ENCODE measurements at regions of chr11 and their contacts with region 1.

Region 1: GRCh38 chr11:62787005-62787759 is at the start of gene TMEM179B:
- DNase-seq: peak; percentile 97 to 98
- ATAC-seq: peak; percentile 89 to 91 (median 90)
- H3K4me3 ChIP-seq: peak within 1 kb of the TSS; percentile 97
- H3K27ac ChIP-seq: peak within 1 kb of the TSS; percentile 99
- H3K4me1 ChIP-seq: peaks cover 34% of the 10 kb centered on the region
- H3K27me3 ChIP-seq: no peaks in the 10 kb centered on the region
- CTCF ChIP-seq: peak; percentile 39
- total RNA-seq, gene TMEM179B: 12.2 to 18.5 (median 16.0) TPM

Region 2: DNA sequence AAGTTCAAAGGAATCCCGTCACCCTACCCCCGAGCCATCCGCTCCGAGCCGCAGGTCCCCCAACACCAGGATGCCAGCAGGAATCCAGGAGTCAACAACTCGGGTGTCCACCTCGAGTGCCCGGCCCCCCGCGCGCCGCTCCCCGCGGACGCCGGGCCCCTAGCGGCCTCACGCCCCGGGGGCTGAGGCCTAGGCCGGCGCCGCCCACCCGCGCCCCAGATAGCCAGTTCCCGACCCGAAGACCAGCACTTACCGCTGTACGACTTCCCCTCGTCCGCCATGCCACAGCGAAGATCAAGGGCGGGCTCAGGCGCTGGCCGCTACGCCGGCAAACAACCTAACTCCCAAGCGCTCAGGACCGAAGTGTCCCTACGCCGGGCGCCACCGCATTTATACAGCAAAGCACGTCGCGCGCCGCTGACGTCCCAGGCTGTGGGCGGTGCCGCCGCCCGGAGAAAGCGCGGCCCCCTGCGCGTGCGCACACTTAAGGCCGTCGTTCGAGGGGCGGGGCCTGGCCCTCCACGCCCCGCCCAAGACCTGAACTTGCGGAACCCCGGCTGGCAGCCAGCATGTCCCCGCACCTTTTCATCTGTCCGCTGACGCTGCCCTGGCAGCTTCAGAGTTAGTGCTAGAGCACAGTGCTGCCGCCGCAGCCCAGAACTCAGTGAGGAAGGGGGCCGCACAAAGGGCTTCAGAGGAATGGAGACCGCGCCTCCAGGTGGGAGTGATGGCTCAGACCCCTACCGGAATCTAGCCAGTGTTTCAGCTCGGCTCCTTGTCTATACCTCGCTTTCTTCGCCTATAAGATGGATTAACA is 18.1 kb after region 1 on chr11 and contains the start of gene NXF1:
- intact Hi-C with region 1: loop called in 1 of 2 experiments (anchors 2 kb)
- DNase-seq: peak; percentile 94 to 98
- ATAC-seq: peak; percentile 88 to 89 (median 88)
- H3K4me3 ChIP-seq: peak within 1 kb of the TSS; percentile 95
- H3K27ac ChIP-seq: peak within 1 kb of the TSS; percentile 96
- H3K4me1 ChIP-seq: peaks cover 22% of the 10 kb centered on the region
- H3K27me3 ChIP-seq: no peaks in the 10 kb centered on the region
- CTCF ChIP-seq: no peak
- total RNA-seq, gene NXF1: 38.3 to 45.4 (median 41.9) TPM